MCF 10A (cell line): ENCODE measurements at regions of chr20 and their contacts with region 1.

Region 1: DNA sequence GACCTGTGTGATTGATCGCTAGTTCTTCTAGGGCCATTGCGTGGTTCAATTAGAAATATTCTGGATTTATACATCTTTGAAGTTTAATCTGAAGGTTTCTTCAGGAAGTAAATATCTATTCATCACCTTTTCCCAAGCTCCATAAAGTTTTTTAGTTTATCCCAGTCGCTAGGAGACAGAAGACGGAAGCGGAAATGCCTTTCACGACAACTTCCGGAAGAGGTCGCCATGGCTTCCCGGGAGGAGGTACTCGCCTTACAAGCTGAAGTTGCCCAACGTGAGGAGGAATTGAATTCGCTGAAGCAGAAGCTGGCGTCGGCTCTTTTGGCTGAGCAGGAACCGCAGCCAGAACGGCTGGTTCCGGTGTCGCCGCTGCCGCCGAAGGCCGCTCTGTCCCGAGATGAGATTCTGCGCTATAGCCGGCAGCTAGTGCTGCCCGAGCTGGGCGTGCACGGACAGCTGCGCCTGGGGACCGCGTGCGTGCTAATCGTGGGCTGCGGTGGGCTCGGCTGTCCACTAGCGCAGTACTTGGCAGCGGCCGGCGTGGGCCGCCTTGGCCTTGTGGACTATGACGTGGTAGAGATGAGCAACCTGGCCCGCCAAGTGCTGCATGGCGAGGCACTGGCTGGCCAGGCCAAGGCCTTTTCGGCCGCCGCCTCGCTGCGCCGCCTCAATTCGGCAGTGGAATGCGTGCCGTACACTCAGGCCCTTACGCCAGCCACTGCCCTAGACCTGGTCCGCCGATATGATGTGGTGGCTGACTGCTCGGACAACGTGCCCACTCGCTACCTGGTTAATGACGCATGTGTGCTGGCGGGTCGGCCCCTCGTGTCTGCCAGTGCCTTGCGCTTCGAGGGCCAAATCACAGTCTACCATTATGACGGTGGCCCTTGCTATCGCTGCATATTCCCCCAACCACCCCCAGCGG is at the start of gene MOCS3:
- DNase-seq: peak; percentile 92
- H3K4me3 Mint-ChIP-seq: peak within 1 kb of the TSS; percentile 91
- H3K27ac Mint-ChIP-seq: peak within 1 kb of the TSS; percentile 100
- H3K4me1 Mint-ChIP-seq: peaks cover 15% of the 10 kb centered on the region
- H3K27me3 Mint-ChIP-seq: no peaks in the 10 kb centered on the region
- CTCF ChIP-seq: no peak
- total RNA-seq, gene MOCS3: 5.8 and 6.0 TPM in 2 replicates

Region 2: DNA sequence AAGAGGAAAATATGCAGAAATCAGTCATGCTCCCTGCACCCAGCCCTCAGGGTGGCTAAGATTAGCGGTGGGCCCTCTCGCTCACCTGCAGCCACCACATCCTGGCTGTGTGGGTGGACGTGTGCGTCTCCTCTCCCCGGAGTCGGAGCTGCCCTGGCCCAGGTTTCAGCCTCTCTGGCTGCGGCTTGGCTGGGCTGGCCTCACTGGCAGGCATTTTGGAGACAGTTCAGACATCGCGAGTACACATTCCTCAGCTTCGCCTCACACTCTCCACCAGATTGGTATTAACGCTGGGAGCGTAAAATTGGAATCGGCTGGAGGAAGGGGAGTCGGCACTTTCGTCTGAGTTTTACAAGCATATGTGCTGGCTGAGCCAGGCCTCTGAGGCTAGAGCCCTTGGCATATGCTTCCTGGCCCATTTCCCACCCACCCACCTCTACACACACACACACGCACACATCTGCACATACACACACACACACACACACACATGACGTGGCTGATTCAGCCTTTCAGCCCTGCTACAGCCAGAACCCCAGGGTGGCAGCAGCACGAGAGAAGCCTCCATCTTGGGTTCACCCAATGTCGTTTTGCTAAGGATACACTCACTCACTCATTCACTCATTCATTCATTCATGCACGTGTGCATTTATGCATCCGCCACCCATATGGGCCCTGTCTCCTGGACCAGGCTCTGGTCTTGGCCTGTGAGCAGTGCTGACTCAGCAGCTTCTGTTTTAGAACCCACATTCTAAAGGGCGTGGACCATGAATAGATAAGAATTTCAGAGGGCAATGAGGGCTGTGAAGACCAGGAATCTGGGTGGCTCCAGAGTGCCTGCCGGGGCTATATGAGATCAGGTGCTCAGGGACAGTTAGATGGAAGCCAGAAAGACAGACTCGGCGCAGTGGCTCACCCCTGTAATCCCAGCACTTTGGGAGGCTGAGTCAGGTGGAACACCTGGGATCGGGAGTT is 121.1 kb before region 1 on chr20:
- CTCF ChIA-PET with region 1: interaction called, 3 read pairs
- POLR2A ChIA-PET with region 1: interaction called, 15 read pairs
- intact Hi-C with region 1: no loop called
- DNase-seq: peak; percentile 74
- H3K4me3 Mint-ChIP-seq: peak overlapping the region; percentile 47
- H3K27ac Mint-ChIP-seq: peak overlapping the region; percentile 93
- H3K4me1 Mint-ChIP-seq: peaks cover 21% of the 10 kb centered on the region
- H3K27me3 Mint-ChIP-seq: no peaks in the 10 kb centered on the region
- CTCF ChIP-seq: no peak

Region 3: GRCh38 chr20:50904067-50904570 is 54.8 kb before region 1 on chr20:
- CTCF ChIA-PET with region 1: no interaction called
- POLR2A ChIA-PET with region 1: no interaction called
- intact Hi-C with region 1: no loop called
- DNase-seq: no peak
- H3K4me3 Mint-ChIP-seq: no peak overlapping the region
- H3K27ac Mint-ChIP-seq: no peak overlapping the region
- H3K4me1 Mint-ChIP-seq: peaks cover 6% of the 10 kb centered on the region
- H3K27me3 Mint-ChIP-seq: no peaks in the 10 kb centered on the region
- CTCF ChIP-seq: no peak

Region 4: DNA sequence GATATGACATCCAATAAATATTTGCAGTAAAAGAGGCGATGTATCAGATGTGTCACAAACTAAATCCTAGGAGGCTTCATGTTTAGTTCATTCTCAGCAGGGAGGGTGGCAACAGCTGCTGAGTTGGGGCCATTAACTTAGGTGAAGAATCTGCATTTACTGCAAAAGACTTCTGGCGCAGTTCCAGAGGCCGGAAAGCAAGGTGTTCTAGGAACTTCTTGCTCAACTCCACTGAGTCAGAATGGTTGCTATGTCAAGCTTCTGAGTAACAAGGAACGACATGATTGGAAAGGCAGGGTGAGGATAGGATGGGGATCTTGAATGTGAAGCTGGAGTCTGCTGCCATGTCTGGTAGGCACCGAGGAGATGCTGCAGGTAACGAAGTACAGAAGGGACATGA is 39.3 kb before region 1 on chr20:
- CTCF ChIA-PET with region 1: interaction called, 4 read pairs
- POLR2A ChIA-PET with region 1: interaction called, 136 read pairs
- intact Hi-C with region 1: no loop called
- DNase-seq: peak; percentile 96
- H3K4me3 Mint-ChIP-seq: peak overlapping the region; percentile 55
- H3K27ac Mint-ChIP-seq: peak overlapping the region; percentile 94
- H3K4me1 Mint-ChIP-seq: peaks cover 37% of the 10 kb centered on the region
- H3K27me3 Mint-ChIP-seq: no peaks in the 10 kb centered on the region
- CTCF ChIP-seq: no peak

Region 5: DNA sequence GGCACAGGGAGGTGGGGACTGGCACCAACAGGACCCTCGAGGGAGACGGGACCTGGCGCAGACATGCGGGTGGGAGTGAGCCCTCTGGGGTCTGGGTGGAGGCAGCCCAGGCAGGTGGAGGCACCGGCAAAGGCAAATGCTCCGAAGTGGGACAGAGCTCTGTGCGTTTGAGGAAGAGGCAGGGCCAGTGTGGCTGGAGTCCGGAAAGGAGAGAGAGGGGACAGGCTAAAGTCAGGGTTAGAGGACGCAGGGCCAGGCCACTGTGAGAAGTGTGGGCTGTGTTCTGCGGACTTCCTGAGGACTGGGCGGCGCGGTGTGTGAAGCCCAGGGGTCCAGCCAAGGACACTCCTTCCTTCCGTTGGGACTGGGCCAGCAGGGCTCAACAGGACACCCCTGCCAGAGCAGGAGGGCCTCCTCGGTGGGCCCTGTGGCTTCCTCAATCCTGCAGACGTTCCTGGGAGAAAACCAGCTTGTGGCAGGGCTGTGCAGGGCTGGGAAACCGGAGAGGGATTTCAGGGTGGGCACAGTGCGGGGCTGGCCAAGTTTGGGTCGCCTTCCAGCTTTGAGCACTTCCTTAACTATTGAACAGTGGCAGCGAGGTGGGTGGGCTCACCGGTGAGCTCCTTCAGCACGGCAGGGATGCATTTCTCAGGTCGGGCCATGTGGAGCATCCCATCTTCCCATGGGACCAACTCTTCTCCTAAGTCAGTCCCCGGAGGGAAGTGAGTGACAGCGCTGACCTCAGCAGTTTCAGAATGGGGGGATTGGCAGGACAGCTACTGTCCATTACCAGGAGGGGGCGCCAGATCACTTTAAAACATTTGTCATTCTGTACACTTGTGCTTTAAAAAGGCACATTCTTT is 22.2 kb after region 1 on chr20:
- CTCF ChIA-PET with region 1: interaction called, 17 read pairs
- POLR2A ChIA-PET with region 1: interaction called, 40 read pairs
- intact Hi-C with region 1: loop called (anchors 1 kb)
- DNase-seq: peak; percentile 80
- H3K4me3 Mint-ChIP-seq: no peak overlapping the region
- H3K27ac Mint-ChIP-seq: peak overlapping the region; percentile 97
- H3K4me1 Mint-ChIP-seq: peaks cover 34% of the 10 kb centered on the region
- H3K27me3 Mint-ChIP-seq: no peaks in the 10 kb centered on the region
- CTCF ChIP-seq: peak; percentile 75